Activated naive CD4-positive, alpha-beta T cell treated with anti-CD3 and anti-CD28 coated beads for 36 hours (primary cell): ENCODE measurements at regions of chr1 and their contacts with region 1.

Region 1: GRCh38 chr1:225999227-225999911 is at the start of gene SDE2:
- DNase-seq: peak; percentile 100
- H3K4me3 Mint-ChIP-seq: peak within 1 kb of the TSS; percentile 100
- H3K27ac Mint-ChIP-seq: peak within 1 kb of the TSS; percentile 100
- H3K4me1 Mint-ChIP-seq: peaks cover 68% of the 10 kb centered on the region
- H3K27me3 Mint-ChIP-seq: no peaks in the 10 kb centered on the region
- total RNA-seq, gene SDE2: 15.3 to 16.5 TPM

Region 2: GRCh38 chr1:225428068-225428880 is 571.1 kb before region 1 on chr1:
- CTCF ChIA-PET with region 1: no interaction called
- intact Hi-C with region 1: loop called (anchors 1 kb)
- DNase-seq: peak; percentile 94
- H3K4me3 Mint-ChIP-seq: peak overlapping the region; percentile 85
- H3K27ac Mint-ChIP-seq: peak overlapping the region; percentile 96
- H3K4me1 Mint-ChIP-seq: peaks cover 43% of the 10 kb centered on the region
- H3K27me3 Mint-ChIP-seq: no peaks in the 10 kb centered on the region

Region 3: DNA sequence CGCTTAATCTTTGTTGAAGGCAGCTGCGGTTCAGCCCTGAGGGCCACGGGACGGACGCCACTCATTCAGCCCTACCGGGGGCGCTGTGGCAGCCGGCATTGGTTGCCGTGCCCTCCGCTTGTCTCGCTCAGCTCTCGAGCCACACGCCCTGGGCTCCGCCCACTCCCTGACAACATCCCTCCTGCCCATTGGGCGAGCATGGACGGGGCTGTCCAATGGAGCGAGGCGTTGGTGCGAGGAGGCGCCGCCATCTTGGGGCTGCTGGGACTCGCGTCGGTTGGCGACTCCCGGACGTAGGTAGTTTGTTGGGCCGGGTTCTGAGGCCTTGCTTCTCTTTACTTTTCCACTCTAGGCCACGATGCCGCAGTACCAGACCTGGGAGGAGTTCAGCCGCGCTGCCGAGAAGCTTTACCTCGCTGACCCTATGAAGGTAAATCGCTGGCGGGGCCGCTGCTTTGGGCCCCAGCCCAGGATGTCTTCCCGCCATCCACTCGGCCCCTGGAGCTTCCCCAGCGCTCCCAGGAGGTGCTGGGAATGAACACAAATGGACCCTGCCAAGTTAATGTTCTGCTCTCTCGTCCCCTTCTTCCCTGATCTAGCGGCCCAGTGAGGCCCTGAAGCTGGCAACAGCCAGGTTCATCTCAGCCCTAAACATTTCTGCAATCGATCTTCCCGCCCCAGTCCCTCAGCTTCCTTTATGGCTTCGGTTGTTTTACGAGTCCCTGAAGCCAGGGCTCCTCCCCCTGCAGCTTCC is 221.6 kb before region 1 on chr1 and contains the start of gene SRP9:
- CTCF ChIA-PET with region 1: no interaction called
- intact Hi-C with region 1: loop called (anchors 1 kb)
- DNase-seq: peak; percentile 99
- H3K4me3 Mint-ChIP-seq: no peak within 1 kb of the TSS
- H3K27ac Mint-ChIP-seq: no peak within 1 kb of the TSS
- H3K4me1 Mint-ChIP-seq: peaks cover 32% of the 10 kb centered on the region
- H3K27me3 Mint-ChIP-seq: no peaks in the 10 kb centered on the region
- total RNA-seq, gene SRP9: 356 to 363 TPM

Region 4: GRCh38 chr1:225923692-225924555 is 75.4 kb before region 1 on chr1 and contains the start of gene PYCR2:
- CTCF ChIA-PET with region 1: no interaction called
- intact Hi-C with region 1: loop called (anchors 1 kb)
- DNase-seq: peak; percentile 96
- H3K4me3 Mint-ChIP-seq: peak within 1 kb of the TSS; percentile 95
- H3K27ac Mint-ChIP-seq: peak within 1 kb of the TSS; percentile 90
- H3K4me1 Mint-ChIP-seq: peaks cover 59% of the 10 kb centered on the region
- H3K27me3 Mint-ChIP-seq: no peaks in the 10 kb centered on the region
- total RNA-seq, gene PYCR2: 143 to 149 TPM

Region 5: DNA sequence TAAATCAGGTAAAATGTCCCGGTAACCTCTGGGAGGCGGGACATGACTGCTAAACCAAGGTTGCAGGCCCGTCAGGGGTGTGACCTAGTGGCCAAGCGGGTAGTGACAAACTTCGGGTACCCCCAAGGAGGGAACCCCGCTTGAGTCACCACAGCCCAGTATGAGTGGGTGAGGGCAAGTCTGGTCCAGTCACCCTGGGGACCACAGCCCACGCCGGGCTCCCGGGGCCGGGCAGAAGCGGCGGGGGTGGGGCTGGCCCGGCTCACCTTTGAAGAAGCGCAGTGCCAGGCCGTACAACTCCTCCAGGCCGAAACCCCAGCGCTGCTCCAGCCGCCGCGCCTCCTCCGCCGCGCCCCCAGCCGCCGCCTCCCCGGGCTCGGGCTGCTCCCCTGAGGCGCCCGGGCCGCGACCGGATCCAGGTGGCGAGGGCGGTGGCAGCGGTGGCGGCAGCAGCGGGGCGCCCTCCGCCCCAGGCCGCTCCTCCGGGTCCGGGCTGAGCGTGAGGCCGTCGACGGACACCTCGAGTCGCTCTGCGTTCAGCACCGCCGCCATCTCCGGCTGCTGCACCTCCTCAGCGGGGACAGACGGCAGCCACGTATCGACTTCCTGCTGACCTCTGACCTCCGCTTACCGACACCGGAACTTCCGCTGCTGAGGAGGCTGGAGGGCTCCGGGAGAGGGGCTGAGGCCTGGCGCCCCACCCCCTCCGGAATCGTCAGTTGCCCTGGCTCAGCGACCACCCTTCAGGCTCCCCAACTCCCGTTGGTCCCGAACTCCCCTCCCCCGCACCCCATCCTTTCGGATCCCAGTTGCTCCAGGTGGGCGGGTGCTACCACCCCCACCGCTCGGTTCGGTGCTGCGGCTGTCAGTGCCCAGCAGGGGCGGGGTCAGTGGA is 187.0 kb after region 1 on chr1 and contains the start of gene ACBD3:
- CTCF ChIA-PET with region 1: no interaction called
- intact Hi-C with region 1: loop called (anchors 2 kb)
- DNase-seq: peak; percentile 91
- H3K4me3 Mint-ChIP-seq: peak within 1 kb of the TSS; percentile 89
- H3K27ac Mint-ChIP-seq: peak within 1 kb of the TSS; percentile 87
- H3K4me1 Mint-ChIP-seq: peaks cover 34% of the 10 kb centered on the region
- H3K27me3 Mint-ChIP-seq: no peaks in the 10 kb centered on the region
- total RNA-seq, gene ACBD3: 15.0 to 15.7 TPM

Region 6: GRCh38 chr1:226332947-226333346 is 333.6 kb after region 1 on chr1:
- CTCF ChIA-PET with region 1: interaction called, 4 read pairs
- intact Hi-C with region 1: loop called (anchors 5 kb)
- DNase-seq: no peak
- H3K4me3 Mint-ChIP-seq: no peak overlapping the region
- H3K27ac Mint-ChIP-seq: no peak overlapping the region
- H3K4me1 Mint-ChIP-seq: peaks cover 13% of the 10 kb centered on the region
- H3K27me3 Mint-ChIP-seq: no peaks in the 10 kb centered on the region